PC-9 (cell line): ENCODE measurements at regions of chr6 and their contacts with region 1.

Region 1: DNA sequence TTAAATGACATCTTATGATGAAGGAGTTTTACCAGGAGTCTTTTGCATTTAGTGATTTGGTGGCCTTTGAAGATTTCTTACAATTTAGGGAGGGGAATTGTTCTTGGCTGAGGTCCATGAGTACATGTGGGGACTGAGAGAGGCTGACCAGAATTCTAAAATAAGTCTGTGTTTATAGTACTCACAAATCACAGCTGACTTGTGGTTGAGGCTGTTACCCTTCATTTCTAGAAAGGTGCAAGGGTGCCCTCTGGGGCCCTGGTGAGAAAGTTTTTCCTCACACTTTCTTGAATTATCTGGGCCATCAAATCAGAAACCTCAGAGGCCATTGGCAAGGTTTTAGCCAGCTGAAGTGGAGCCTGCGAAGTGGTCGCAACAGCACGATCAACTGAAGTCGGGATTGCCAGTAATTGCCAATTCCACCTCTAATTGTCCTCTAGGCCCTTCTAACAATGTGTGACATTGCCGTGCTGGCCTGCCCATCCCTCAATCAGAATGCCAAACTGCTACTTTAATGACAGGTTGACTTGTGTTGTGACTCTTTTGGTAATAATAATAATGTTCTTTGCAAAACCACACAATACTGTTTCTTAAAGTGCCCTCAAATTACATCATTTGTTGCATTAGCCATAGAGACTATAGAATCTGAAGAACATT is 221.6 kb downstream of the OGFRL1 start:
- DNase-seq: peak; percentile 62 to 67
- H3K4me3 ChIP-seq: no peak overlapping the region
- H3K27ac ChIP-seq: no peak overlapping the region
- H3K4me1 ChIP-seq: peaks cover 4% of the 10 kb centered on the region; the same call in 1 of the 2 replicates
- H3K27me3 ChIP-seq: no peaks in the 10 kb centered on the region
- CTCF ChIP-seq: peak; percentile 82

Region 2: DNA sequence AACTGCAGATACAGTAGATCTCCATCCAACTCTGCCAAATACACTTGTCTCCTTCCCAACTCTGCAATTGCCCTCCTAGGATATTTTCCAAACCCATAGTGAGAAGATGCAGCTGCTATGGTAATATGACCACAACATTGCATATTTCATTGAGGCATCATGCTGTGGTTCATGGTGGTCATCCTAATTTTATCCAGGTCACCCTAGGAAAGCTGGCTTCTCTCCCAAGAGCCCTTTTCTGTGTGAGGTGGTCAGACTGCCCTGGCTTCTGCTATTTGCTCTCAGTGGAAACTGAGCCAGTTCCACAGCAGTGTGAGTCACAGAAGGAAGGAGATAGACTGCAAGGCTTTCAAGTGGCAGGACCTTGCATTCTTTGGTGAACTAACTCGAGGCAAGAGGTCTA is 216.1 kb before region 1 on chr6:
- CTCF ChIA-PET with region 1: no interaction called
- POLR2A ChIA-PET with region 1: no interaction called
- intact Hi-C with region 1: loop called (anchors 5 kb)
- DNase-seq: peak; percentile 24 to 64
- H3K4me3 ChIP-seq: no peak overlapping the region
- H3K27ac ChIP-seq: 0 out of 2 replicates have a peak overlapping the region, but pooled peaks have one; percentile 7
- H3K4me1 ChIP-seq: peaks cover 23% of the 10 kb centered on the region
- H3K27me3 ChIP-seq: no peaks in the 10 kb centered on the region
- CTCF ChIP-seq: no peak

Region 3: DNA sequence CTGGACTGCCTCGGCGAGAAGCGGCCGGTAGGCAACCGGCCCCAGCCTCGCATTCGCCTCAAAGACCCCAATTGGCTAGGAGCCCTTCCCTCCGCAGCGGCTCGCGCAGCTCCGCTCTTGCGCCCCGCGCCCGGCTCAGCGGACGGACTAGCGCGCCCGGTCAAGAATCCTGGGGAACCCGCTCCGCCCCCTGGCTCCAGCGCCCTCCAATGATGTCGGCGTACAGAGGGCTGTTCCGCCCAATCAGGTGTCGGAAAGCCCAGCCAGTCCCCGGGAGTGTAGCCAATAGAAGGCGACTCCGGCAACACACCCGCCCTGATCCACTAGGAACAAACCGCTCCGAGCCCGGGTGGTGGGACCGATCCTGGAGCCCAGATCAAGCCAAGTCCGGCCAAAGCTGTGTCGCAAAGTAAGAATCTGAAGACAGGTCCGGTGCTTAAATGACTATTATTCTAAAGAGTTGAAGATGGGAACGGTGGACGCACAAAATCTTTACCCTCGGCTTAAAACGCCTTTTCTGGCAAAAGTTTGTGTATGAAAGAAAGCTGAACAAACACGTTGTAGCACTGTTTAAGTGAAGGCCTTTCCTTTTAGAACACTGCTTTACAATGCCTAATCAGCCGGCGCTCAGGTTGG is 89.4 kb before region 1 on chr6:
- CTCF ChIA-PET with region 1: no interaction called
- POLR2A ChIA-PET with region 1: interaction called, 4 read pairs
- intact Hi-C with region 1: loop called (anchors 1 kb)
- DNase-seq: peak; percentile 89 to 96
- H3K4me3 ChIP-seq: peak overlapping the region; percentile 81
- H3K27ac ChIP-seq: peak overlapping the region; percentile 48
- H3K4me1 ChIP-seq: peaks cover 30% of the 10 kb centered on the region
- H3K27me3 ChIP-seq: no peaks in the 10 kb centered on the region
- CTCF ChIP-seq: no peak

Region 4: GRCh38 chr6:71468841-71469750 is 41.1 kb before region 1 on chr6:
- CTCF ChIA-PET with region 1: interaction called, 14 read pairs
- POLR2A ChIA-PET with region 1: no interaction called
- intact Hi-C with region 1: no loop called
- DNase-seq: peak; percentile 53 to 67
- H3K4me3 ChIP-seq: no peak overlapping the region
- H3K27ac ChIP-seq: no peak overlapping the region
- H3K4me1 ChIP-seq: peaks cover 6% of the 10 kb centered on the region
- H3K27me3 ChIP-seq: no peaks in the 10 kb centered on the region
- CTCF ChIP-seq: no peak

Region 5: GRCh38 chr6:71544028-71544427 is 33.8 kb after region 1 on chr6:
- CTCF ChIA-PET with region 1: no interaction called
- POLR2A ChIA-PET with region 1: no interaction called
- intact Hi-C with region 1: no loop called
- DNase-seq: peak; percentile 33 to 76
- H3K4me3 ChIP-seq: no peak overlapping the region
- H3K27ac ChIP-seq: no peak overlapping the region
- H3K4me1 ChIP-seq: peaks cover 6% of the 10 kb centered on the region; the same call in 1 of the 2 replicates
- H3K27me3 ChIP-seq: no peaks in the 10 kb centered on the region
- CTCF ChIP-seq: no peak